ENCODE measurements at regions of chr4 and their contacts with region 1.

Region 1: GRCh38 chr4:1928356-1929239 is 57.4 kb downstream of the NSD2 start:
- DNase-seq: no peak
- ATAC-seq: no peak

Region 2: GRCh38 chr4:1792832-1793495 is 135.6 kb before region 1 on chr4 and contains the start of gene FGFR3:
- intact Hi-C with region 1: no loop called
- DNase-seq: peak; percentile 71
- ATAC-seq: peak; percentile 88
- total RNA-seq, gene FGFR3: 1.7 TPM

Region 3: DNA sequence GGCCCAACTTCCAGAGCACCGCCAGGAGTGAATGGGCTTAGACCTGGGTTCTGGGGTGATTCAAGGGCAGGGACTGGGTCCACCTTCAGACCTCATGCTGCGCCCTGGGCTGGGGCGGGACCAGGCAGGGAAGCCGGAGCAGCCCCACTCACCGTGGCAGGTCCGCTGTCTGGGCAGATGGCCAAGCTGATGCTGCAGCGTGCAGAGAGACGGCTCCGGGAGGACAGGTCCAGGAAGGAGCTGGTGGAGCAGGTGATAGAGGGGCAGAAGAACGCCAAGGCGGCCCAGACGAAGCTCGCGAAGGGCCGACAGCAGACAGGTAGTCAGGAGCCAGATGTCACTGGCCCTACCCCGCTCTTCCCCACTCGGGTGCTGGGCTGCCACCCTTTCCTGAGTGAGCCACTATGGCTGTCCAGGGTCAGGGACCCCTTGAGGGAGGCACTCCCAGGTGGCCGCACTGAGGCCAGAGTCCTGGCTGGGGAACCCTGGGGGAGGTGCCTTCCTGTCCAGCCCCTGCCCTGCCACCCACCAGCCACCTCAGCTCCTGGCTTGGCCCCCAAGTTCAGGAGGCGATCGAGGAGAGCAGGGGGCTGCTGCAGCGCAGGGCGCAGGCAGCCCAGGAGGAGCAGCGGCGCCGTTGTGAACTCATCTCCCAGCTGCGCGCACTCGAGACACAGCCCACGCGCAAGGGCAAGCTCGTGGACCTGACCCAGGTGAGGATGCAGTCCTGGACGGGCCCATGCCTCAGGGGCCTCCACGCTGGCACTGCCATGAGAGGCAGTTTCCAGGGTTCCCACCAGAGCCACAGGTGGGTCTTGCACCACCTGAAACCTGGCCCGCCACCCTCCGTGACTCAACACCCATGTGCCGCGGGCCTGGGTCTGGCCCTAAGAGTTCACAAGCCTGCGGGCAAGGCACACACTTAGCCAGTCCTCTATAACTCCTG is 530.2 kb after region 1 on chr4:
- intact Hi-C with region 1: loop called (anchors 10 kb)
- DNase-seq: no peak
- ATAC-seq: no peak

Measured in left ventricle myocardium superior (tissue), 1 donor.